Gastrocnemius medialis (tissue), 4 donors: ENCODE measurements at regions of chr6 and their contacts with region 1.

Region 1: GRCh38 chr6:126180585-126180984 is 159.3 kb upstream of the CENPW start:
- DNase-seq: peak; percentile 47 to 55
- ATAC-seq: peak; percentile 94 to 98
- H3K4me3 ChIP-seq: no peak overlapping the region
- H3K27ac ChIP-seq: peak overlapping the region in 3 of 4 donors; percentile 63 to 70 (median 66)
- H3K4me1 ChIP-seq: peaks cover 4 to 11% of the 10 kb centered on the region in 2 donors
- H3K27me3 ChIP-seq: no peaks in the 10 kb centered on the region
- CTCF ChIP-seq: no peak
- POLR2A ChIP-seq: no peak

Region 2: DNA sequence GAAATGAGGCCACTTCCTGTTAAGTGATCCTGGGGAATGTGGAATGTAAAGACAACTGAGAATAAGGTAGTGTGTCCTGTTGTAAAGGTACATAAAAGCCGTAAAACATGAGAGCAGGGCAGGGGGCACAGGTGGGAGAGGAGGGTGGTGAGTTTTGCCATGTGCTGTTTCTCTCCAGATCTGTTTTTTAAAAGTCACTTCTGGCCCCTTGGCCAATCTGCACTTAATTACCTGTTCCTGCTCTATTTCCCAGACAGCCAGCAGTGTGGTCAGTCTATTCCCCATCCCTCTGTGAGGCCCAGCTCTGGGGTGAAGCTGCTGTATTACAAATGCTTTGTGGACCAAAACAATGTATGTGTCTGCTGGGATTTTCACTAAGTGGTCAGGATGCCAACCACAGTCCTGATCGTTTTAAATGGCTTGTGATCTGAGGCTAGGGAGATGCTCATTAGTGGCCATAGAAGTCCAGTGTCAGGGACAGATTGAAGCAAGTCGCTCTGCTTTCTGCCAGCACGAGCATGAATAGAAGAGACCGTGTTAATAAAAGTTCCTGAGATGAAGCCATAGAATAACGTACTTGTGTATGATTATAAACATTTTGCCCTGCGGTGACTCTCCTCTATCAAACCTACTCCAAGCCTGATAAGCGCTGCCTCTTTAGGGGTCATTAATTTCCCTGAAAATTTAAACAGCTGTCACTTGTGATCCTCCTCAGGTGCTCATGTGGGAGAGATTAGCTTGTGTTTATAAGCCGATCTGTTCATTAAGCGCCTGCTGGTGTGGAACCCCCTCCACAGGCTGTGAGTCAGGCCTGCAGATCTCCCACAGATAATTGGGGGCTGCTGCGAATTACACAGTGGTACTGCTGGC is 47.5 kb after region 1 on chr6:
- in situ Hi-C with region 1: no loop called
- intact Hi-C with region 1: no loop called
- DNase-seq: no peak
- ATAC-seq: no peak
- H3K4me3 ChIP-seq: no peak overlapping the region
- H3K27ac ChIP-seq: no peak overlapping the region
- H3K4me1 ChIP-seq: no peaks in the 10 kb centered on the region
- H3K27me3 ChIP-seq: no peaks in the 10 kb centered on the region
- CTCF ChIP-seq: no peak
- POLR2A ChIP-seq: no peak

Region 3: DNA sequence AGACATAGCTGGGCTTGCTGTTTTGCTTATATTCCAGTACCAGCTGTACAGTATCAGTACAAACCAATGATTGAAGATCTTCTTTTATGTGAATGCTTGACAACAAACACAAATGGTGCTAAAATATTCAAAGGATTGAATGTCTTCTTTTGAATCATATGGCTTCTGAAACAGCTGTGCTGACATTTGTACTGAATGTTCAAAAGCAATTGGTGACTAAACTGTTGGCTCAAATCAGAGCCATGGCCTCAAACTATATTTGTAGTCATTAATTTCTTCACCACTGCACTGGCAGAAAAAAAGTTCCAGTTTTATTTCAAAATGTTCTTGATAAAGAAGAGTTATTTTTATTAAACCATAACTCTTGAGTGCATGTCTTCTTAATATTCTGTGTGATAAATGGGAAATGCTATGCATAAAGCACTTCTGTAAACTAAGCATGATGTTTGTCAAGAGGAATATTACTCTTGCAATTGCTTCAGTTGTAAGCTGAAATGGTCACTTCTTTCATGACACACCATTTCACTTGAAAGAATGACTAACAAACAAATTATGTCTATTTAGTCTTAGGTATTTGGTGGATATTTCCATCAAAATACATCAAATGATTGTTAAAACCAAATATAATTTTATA is 113.4 kb after region 1 on chr6:
- in situ Hi-C with region 1: no loop called
- intact Hi-C with region 1: loop called (anchors 5 kb)
- DNase-seq: no peak
- ATAC-seq: peak; percentile 93 to 96
- H3K4me3 ChIP-seq: no peak overlapping the region
- H3K27ac ChIP-seq: peak overlapping the region; percentile 27 to 77 (median 52)
- H3K4me1 ChIP-seq: peaks cover 0 to 12% of the 10 kb centered on the region in 2 donors
- H3K27me3 ChIP-seq: no peaks in the 10 kb centered on the region
- CTCF ChIP-seq: no peak
- POLR2A ChIP-seq: no peak